Stomach (tissue), 19 donors: ENCODE measurements at regions of chr10 and their contacts with region 1.

Region 1: DNA sequence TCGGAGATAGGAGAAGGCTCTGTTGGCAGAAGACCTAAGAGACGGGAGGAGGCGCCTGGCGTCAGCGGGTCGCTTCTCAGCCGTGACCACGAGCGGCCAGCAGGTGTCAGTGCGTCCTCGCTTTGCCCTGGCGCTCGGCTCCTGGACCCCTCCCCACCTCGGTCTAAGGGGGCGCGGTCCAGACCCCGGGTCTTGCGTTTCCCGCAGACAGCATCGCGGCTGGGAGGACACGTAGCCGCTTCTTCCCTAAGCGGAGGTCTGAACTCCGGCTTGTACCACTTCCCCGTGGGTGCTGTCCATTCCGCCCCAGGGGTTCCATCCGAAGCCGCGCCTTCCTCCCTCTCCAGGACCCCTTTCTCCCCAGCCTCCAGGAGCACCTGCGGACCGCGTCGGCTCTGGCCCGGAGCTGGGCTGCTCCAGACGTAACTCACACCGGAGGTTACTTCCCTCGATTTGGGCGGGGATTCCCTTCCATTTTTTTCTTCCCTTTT is 593 bp upstream of the ADRA2A start:
- DNase-seq: peak; percentile 61 to 89
- H3K4me3 ChIP-seq: peak overlapping the region; percentile 47 to 71 (median 54)
- H3K27ac ChIP-seq: peak overlapping the region in 2 of 5 donors; percentile 0 to 53
- H3K4me1 ChIP-seq: peaks cover 31 to 39% (median 32%) of the 10 kb centered on the region in 4 donors
- H3K27me3 ChIP-seq: peaks cover 12 to 89% (median 54%) of the 10 kb centered on the region in 3 donors
- CTCF ChIP-seq: peak in 5 of 7 experiments; percentile 63 to 81 (median 73)
- EP300 ChIP-seq: no peak
- POLR2A ChIP-seq: no peak

Region 2: DNA sequence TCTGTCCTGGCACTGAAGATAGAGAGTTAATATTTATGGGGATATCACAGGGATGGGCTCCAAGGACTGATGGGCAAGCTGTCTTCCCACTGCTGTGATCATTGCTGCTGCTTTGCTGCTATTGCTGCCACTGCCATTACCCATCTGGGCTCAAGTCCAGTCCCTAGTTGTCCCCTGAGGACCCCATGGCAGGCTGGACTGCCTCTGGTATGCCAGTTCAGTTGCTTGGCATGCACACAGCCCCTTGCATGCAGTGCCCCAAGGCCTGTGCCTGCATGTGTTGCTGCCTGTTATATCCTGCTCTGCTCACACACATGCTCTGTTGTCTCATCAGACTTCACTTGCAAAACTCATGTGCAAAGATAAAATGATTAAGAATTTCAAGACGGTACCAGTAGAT is 110.1 kb after region 1 on chr10:
- intact Hi-C with region 1: no loop called
- DNase-seq: no peak
- H3K4me3 ChIP-seq: no peak overlapping the region
- H3K27ac ChIP-seq: no peak overlapping the region
- H3K4me1 ChIP-seq: no peaks in the 10 kb centered on the region
- H3K27me3 ChIP-seq: no peaks in the 10 kb centered on the region
- CTCF ChIP-seq: no peak
- EP300 ChIP-seq: no peak
- POLR2A ChIP-seq: no peak

Region 3: DNA sequence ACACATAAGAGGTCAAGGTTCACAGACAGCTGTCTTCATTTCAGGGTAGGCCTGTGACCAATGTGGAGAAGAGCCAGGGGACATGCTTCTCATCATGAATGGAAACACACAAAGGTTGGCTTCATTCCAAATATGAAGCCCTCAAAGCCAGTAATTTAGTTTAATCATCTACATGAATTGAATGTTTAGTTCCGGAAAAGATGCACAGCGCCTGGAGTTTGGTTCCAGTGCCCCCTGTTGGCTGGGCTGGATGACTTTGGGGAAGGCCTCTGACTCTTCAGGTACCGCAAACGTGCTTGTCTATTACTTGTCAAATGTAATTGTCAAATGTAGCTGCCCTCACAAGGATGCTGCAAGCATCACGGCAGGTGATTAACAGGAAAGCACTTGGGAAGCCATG is 131.3 kb after region 1 on chr10:
- intact Hi-C with region 1: loop called (anchors 10 kb)
- DNase-seq: peak; percentile 50 to 54
- H3K4me3 ChIP-seq: no peak overlapping the region
- H3K27ac ChIP-seq: no peak overlapping the region
- H3K4me1 ChIP-seq: no peaks in the 10 kb centered on the region
- H3K27me3 ChIP-seq: peaks cover 0 to 14% (median 0%) of the 10 kb centered on the region in 3 donors
- CTCF ChIP-seq: peak in 4 of 7 experiments; percentile 10 to 51 (median 44)
- EP300 ChIP-seq: no peak
- POLR2A ChIP-seq: no peak

Region 4: GRCh38 chr10:111360260-111360925 is 284.2 kb after region 1 on chr10:
- intact Hi-C with region 1: loop called (anchors 10 kb)
- DNase-seq: peak; percentile 51 to 81
- H3K4me3 ChIP-seq: no peak overlapping the region
- H3K27ac ChIP-seq: no peak overlapping the region
- H3K4me1 ChIP-seq: no peaks in the 10 kb centered on the region
- H3K27me3 ChIP-seq: peaks cover 0 to 5% (median 0%) of the 10 kb centered on the region in 3 donors
- CTCF ChIP-seq: peak in 5 of 7 experiments; percentile 23 to 57 (median 32)
- EP300 ChIP-seq: no peak
- POLR2A ChIP-seq: no peak